Pancreas (tissue), 10 donors: ENCODE measurements at regions of chr4 and their contacts with region 1.

Region 1: DNA sequence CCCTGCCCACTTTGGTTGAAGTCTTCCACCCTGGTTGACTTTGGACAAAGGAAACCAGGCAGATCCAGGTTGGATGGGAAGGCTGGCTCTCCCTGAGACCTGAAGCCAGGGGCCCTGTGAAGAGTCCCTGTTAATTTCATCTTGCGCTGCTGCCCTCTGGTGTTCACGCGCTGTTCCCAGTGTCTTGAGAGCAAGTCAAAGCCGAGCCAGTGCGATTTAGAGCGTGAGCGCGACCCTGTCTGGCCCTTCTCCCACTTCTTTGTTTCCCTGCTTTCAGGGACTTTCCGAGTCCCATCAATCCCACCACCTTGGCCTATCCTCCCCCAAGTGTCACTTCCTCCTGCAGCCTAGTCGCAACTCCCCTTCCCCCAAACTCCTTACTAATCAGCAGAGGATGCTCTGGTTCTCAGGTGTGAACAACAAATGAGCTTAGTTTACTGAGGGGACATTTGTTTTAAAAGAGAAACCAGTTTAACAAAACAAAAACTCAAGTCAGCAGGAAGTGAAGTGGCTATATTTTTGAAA is 25.8 kb upstream of the CHRNA9 start:
- DNase-seq: peak; percentile 76 to 97 (median 89)
- ATAC-seq: peak; percentile 89 to 97 (median 95)
- H3K4me3 ChIP-seq: no peak overlapping the region
- H3K27ac ChIP-seq: no peak overlapping the region
- H3K4me1 ChIP-seq: no peaks in the 10 kb centered on the region
- H3K27me3 ChIP-seq: no peaks in the 10 kb centered on the region
- CTCF ChIP-seq: peak; percentile 72 to 87 (median 80)

Region 2: GRCh38 chr4:40038972-40039371 is 270.3 kb before region 1 on chr4:
- intact Hi-C with region 1: no loop called
- DNase-seq: peak in 1 of 6 donors; percentile 0
- ATAC-seq: no peak
- H3K4me3 ChIP-seq: no peak overlapping the region
- H3K27ac ChIP-seq: no peak overlapping the region
- H3K4me1 ChIP-seq: no peaks in the 10 kb centered on the region
- H3K27me3 ChIP-seq: no peaks in the 10 kb centered on the region
- CTCF ChIP-seq: no peak

Region 3: DNA sequence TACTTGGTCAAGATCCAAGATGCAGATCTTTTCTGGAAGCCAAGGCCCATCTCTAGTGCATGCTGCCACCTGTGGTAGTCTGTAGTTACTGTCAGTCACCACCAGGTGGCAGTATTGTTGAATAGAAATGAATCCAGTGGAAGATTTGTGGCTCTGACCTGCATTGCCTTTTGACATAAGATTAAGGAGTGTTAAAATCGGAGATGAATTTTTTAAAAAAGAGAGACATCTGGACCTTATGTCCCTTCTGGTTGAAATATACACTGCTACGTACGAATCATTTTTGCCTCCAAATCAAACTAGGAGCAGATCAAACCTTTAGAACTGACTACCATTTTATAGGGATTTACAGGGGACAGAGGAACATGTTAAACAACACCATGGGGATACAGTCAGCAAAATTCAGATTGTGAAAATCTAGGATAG is 159.3 kb before region 1 on chr4:
- intact Hi-C with region 1: loop called in 2 of 3 experiments (anchors 5 kb)
- DNase-seq: peak in 4 of 6 donors; percentile 43 to 74 (median 52)
- ATAC-seq: peak; percentile 64 to 99 (median 94)
- H3K4me3 ChIP-seq: no peak overlapping the region
- H3K27ac ChIP-seq: no peak overlapping the region
- H3K4me1 ChIP-seq: peaks cover 0 to 8% (median 0%) of the 10 kb centered on the region in 3 donors
- H3K27me3 ChIP-seq: no peaks in the 10 kb centered on the region
- CTCF ChIP-seq: peak; percentile 88 to 95 (median 90)